Activated B cell treated with CpG ODN at 0.5 μM for 24 hours (primary cell): ENCODE measurements at regions of chr3 and their contacts with region 1.

Region 1: DNA sequence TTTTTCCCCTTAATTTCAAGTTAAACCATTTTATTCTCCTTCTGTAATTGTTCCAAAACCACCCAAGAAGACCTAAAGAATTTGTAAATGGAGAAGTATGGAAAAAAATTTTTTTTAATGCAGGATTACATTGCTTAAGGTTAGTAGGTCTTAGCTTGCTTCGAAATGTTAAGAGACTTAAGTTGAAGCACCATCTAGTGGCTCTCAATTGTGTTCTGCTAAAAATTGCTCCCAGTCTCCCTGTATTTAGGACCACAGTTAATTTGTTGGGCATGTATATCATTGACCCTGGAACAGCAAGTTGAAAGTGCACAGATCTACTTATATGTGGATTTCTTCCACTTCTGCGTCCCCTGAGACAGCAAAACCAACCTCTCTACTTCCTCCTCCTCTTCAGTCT is 32.4 kb downstream of the CD200R1L start:
- DNase-seq: no peak
- ATAC-seq: peak; percentile 26
- H3K4me3 Mint-ChIP-seq: peak overlapping the region; percentile 58
- H3K27ac Mint-ChIP-seq: peak overlapping the region; percentile 79
- H3K4me1 Mint-ChIP-seq: peaks cover 48% of the 10 kb centered on the region
- H3K27me3 Mint-ChIP-seq: no peaks in the 10 kb centered on the region
- CTCF ChIP-seq: no peak

Region 2: GRCh38 chr3:112505907-112506306 is 308.4 kb before region 1 on chr3:
- CTCF ChIA-PET with region 1: no interaction called
- POLR2A ChIA-PET with region 1: no interaction called
- intact Hi-C with region 1: no loop called
- DNase-seq: no peak
- ATAC-seq: peak; percentile 18
- H3K4me3 Mint-ChIP-seq: peak overlapping the region; percentile 12
- H3K27ac Mint-ChIP-seq: peak overlapping the region; percentile 84
- H3K4me1 Mint-ChIP-seq: peaks cover 93% of the 10 kb centered on the region
- H3K27me3 Mint-ChIP-seq: no peaks in the 10 kb centered on the region
- CTCF ChIP-seq: no peak

Region 3: GRCh38 chr3:112718516-112718915 is 95.8 kb before region 1 on chr3:
- CTCF ChIA-PET with region 1: no interaction called
- POLR2A ChIA-PET with region 1: no interaction called
- intact Hi-C with region 1: no loop called
- DNase-seq: no peak
- ATAC-seq: no peak
- H3K4me3 Mint-ChIP-seq: no peak overlapping the region
- H3K27ac Mint-ChIP-seq: no peak overlapping the region
- H3K4me1 Mint-ChIP-seq: no peaks in the 10 kb centered on the region
- H3K27me3 Mint-ChIP-seq: peaks cover 6% of the 10 kb centered on the region
- CTCF ChIP-seq: no peak

Region 4: GRCh38 chr3:112751564-112752512 is 62.4 kb before region 1 on chr3:
- CTCF ChIA-PET with region 1: no interaction called
- POLR2A ChIA-PET with region 1: no interaction called
- intact Hi-C with region 1: no loop called
- DNase-seq: no peak
- ATAC-seq: no peak
- H3K4me3 Mint-ChIP-seq: no peak overlapping the region
- H3K27ac Mint-ChIP-seq: no peak overlapping the region
- H3K4me1 Mint-ChIP-seq: peaks cover 9% of the 10 kb centered on the region
- H3K27me3 Mint-ChIP-seq: no peaks in the 10 kb centered on the region
- CTCF ChIP-seq: no peak

Region 5: GRCh38 chr3:112767177-112767576 is 47.1 kb before region 1 on chr3:
- CTCF ChIA-PET with region 1: no interaction called
- POLR2A ChIA-PET with region 1: interaction called, 4 read pairs
- intact Hi-C with region 1: loop called (anchors 1 kb)
- DNase-seq: no peak
- ATAC-seq: peak; percentile 97
- H3K4me3 Mint-ChIP-seq: peak overlapping the region; percentile 25
- H3K27ac Mint-ChIP-seq: peak overlapping the region; percentile 44
- H3K4me1 Mint-ChIP-seq: peaks cover 37% of the 10 kb centered on the region
- H3K27me3 Mint-ChIP-seq: no peaks in the 10 kb centered on the region
- CTCF ChIP-seq: no peak

Region 6: DNA sequence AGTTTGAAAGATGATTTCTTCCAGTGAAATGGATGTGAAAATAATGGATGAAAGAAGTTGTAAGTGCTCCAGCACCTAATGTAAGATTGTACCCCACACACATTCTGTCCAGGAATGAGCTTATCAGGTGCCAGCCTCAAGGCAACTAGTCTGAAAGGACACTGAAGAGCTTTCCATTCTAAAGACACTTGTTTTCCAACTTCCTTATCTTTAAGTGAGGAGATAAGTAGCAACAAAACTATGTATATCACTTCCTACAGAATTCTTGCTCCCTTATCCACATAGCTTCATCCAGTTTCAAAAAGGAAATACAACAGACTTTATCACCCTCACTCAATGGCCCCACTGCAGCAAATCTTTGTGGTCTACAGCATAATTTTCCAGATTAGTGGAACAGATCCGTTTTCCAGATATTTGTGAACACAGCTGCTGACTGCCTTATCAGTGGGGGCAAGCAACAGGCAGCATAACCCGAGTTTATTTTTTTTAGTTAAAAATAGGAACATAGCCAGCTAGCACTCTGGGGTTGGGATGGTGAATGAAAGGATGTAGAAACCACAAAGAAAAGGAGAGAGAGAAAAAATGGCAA is 28.2 kb before region 1 on chr3:
- CTCF ChIA-PET with region 1: no interaction called
- POLR2A ChIA-PET with region 1: no interaction called
- intact Hi-C with region 1: no loop called
- DNase-seq: no peak
- ATAC-seq: no peak
- H3K4me3 Mint-ChIP-seq: no peak overlapping the region
- H3K27ac Mint-ChIP-seq: no peak overlapping the region
- H3K4me1 Mint-ChIP-seq: no peaks in the 10 kb centered on the region
- H3K27me3 Mint-ChIP-seq: no peaks in the 10 kb centered on the region
- CTCF ChIP-seq: no peak

Region 7: GRCh38 chr3:112847692-112848091 is 33.4 kb after region 1 on chr3:
- CTCF ChIA-PET with region 1: no interaction called
- POLR2A ChIA-PET with region 1: no interaction called
- intact Hi-C with region 1: loop called (anchors 1 kb)
- DNase-seq: no peak
- ATAC-seq: peak; percentile 87
- H3K4me3 Mint-ChIP-seq: peak overlapping the region; percentile 13
- H3K27ac Mint-ChIP-seq: peak overlapping the region; percentile 74
- H3K4me1 Mint-ChIP-seq: peaks cover 32% of the 10 kb centered on the region
- H3K27me3 Mint-ChIP-seq: no peaks in the 10 kb centered on the region
- CTCF ChIP-seq: no peak

Region 8: GRCh38 chr3:112908252-112908651 is 94.0 kb after region 1 on chr3:
- CTCF ChIA-PET with region 1: no interaction called
- POLR2A ChIA-PET with region 1: no interaction called
- intact Hi-C with region 1: loop called (anchors 1 kb)
- DNase-seq: no peak
- ATAC-seq: peak; percentile 93
- H3K4me3 Mint-ChIP-seq: peak overlapping the region; percentile 73
- H3K27ac Mint-ChIP-seq: peak overlapping the region; percentile 95
- H3K4me1 Mint-ChIP-seq: peaks cover 67% of the 10 kb centered on the region
- H3K27me3 Mint-ChIP-seq: no peaks in the 10 kb centered on the region
- CTCF ChIP-seq: no peak

Region 9: DNA sequence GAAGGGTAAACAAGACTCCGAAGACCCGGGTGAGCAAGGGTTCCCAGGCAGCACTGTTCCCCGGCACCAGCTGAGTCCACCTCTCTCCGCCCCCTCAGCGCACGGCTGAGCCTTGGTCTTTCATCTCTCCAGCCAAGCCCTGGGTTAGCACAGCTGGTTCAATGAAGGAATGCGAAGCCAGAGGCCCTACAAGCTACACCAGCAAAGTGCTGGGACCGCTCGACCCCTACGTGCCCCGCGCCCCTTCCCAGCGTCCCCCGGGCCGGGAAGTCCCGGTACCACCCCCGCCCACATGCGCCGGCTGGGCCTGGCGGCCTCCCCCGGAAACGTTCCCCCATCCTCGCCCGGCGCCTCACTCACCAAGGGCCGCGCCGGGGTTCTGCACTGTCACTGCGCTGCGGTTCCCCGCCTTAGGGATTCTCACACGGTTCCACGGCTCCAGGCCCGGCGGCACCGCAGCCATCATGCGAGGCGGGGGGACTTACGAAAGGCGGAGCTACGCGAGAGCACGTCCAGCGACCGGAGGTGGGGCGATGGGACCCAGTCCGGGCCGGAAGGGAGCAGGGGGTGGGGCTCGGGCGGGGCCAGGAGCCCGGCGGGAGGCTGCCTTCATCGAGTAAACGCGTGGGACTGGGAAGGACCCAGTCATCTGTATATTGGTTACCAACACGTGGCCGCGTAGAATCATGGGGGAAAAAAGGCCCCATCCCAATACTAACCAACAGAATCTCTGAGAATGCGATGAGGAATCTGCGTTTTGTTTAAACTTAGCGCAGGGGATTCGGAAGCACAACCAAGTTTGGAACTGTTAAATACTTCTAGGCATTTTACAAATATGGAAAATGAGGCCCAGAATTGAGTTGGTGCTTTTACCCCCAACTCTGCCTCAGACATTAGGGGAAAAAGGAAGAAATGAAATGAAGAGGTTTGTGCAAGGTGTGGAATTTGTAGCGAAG is 205.2 kb after region 1 on chr3:
- CTCF ChIA-PET with region 1: interaction called, 4 read pairs
- POLR2A ChIA-PET with region 1: interaction called, 11 read pairs
- intact Hi-C with region 1: no loop called
- DNase-seq: peak; percentile 81
- ATAC-seq: peak; percentile 87
- H3K4me3 Mint-ChIP-seq: peak overlapping the region; percentile 92
- H3K27ac Mint-ChIP-seq: peak overlapping the region; percentile 95
- H3K4me1 Mint-ChIP-seq: peaks cover 54% of the 10 kb centered on the region
- H3K27me3 Mint-ChIP-seq: no peaks in the 10 kb centered on the region
- CTCF ChIP-seq: no peak